ENCODE measurements at regions of chr19 and their contacts with region 1.

Region 1: DNA sequence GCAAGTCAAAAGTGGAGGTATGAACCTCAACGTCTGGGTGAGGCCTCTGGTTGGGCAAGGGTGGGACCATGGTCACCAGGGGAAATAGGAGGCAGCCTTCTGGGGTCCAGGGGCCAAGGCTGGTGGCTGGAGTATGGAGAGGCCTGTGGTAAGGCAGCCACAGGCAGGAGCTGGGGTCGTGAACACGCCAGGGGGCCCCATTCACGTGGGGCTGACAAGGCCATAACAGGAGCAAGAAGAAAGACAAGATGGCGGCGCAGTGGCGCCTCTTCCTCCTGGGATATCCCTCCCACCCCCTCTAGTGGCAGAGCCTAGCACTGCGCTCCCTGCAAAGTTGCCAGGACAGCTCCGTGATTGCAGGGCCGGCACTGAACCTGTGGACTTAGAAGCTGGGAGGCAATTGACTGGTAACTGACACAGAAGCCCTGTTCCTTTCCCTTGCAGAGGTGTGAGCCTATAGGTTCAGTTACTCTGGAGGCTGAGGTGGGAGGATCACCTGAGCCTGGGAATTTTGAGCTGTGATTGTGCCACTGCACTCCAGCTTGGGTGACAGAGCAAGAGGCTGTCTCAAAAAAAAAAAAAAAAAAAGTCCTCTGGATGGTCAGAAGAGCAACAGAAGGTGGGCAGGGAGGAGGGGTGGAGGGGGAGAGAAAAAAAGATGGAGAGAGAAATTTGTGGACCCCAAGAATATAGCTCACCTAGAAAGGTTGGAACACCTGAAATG is 19.7 kb upstream of the EDDM13 start:
- H3K4me3 ChIP-seq: no peak overlapping the region
- H3K27ac ChIP-seq: no peak overlapping the region
- H3K4me1 ChIP-seq: no peaks in the 10 kb centered on the region
- CTCF ChIP-seq: no peak

Region 2: GRCh38 chr19:56066152-56067023 is 186.5 kb before region 1 on chr19:
- CTCF ChIA-PET with region 1: interaction called, 18 read pairs
- POLR2A ChIA-PET with region 1: no interaction called
- H3K4me3 ChIP-seq: peak overlapping the region; percentile 37
- H3K27ac ChIP-seq: no peak overlapping the region
- H3K4me1 ChIP-seq: no peaks in the 10 kb centered on the region
- CTCF ChIP-seq: peak; percentile 73

Region 3: DNA sequence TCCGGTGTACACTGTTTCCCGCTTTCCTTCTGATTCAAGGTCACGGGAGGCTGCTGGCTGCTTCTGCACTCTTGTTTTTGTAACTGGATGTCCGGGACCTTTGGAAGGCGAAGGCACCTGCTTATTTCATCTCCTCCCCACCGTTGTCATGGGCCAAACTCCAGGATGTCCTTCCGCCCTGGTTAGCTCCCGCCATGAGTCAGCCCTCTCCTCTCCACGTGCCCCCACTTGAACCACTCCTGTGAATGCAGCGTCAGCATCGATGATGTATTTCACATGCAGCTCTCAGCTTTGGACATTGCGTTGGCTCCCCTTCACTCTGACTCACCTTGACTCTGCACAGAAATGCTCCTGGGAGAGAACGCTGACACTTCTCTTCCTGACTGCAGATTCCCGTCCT is 82.6 kb before region 1 on chr19:
- CTCF ChIA-PET with region 1: interaction called, 16 read pairs
- POLR2A ChIA-PET with region 1: no interaction called
- H3K4me3 ChIP-seq: no peak overlapping the region
- H3K27ac ChIP-seq: no peak overlapping the region
- H3K4me1 ChIP-seq: no peaks in the 10 kb centered on the region
- CTCF ChIP-seq: no peak

Region 4: DNA sequence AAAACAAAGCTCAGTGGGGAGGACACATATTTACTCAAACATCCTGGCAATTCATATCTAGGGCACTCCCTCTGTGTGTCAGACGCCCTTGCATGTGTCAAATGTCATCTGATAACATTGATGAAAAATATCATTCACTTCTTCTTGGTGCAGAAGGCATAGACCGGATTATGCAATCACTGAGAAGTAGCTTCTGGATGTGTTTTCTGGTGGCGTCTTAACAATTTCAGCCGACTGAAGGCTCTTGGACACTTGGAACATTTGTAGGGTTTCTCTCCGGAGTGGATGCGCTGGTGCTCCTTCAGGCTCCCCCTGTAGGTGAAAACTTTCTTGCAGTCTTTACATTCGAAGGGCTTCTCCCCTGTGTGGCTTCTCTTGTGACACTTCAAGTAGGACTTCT is 31.5 kb before region 1 on chr19:
- CTCF ChIA-PET with region 1: interaction called, 18 read pairs
- POLR2A ChIA-PET with region 1: no interaction called
- H3K4me3 ChIP-seq: no peak overlapping the region
- H3K27ac ChIP-seq: no peak overlapping the region
- H3K4me1 ChIP-seq: no peaks in the 10 kb centered on the region
- CTCF ChIP-seq: no peak

Region 5: DNA sequence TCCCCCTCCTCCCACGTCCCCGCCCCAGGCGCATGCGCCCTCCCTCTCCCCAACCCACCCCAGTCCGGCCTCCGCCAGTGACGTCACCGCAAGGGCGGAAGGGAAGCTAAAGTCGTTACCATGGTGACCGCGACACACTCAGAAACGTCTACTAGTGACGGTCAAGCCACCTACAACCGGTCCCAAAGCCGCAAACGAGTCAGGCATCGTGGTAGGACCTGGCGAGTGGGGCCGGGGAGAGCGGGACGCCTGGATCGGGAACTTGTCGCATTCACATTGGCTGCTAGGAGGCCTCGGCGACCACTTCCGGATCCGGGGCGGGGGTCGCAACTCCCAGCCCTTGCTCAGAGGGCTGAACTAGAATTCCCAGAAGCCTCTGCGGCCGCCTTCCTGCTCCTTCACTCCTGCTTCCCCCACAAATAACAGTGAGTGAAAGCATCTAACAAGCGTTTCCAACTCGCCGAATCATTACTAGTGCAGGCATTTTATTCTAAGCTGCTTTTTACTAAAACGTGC is 61.8 kb after region 1 on chr19 and contains the start of gene ZSCAN5A:
- CTCF ChIA-PET with region 1: interaction called, 34 read pairs
- POLR2A ChIA-PET with region 1: interaction called, 6 read pairs
- H3K4me3 ChIP-seq: peak within 1 kb of the TSS; percentile 100
- H3K27ac ChIP-seq: peak within 1 kb of the TSS; percentile 90
- H3K4me1 ChIP-seq: 0 out of 2 replicates have a peak, but pooled peaks cover 2% of the 10 kb centered on the region
- CTCF ChIP-seq: no peak

Region 6: GRCh38 chr19:56350416-56351045 is 97.7 kb after region 1 on chr19:
- CTCF ChIA-PET with region 1: interaction called, 11 read pairs
- POLR2A ChIA-PET with region 1: no interaction called
- H3K4me3 ChIP-seq: no peak overlapping the region
- H3K27ac ChIP-seq: no peak overlapping the region
- H3K4me1 ChIP-seq: no peaks in the 10 kb centered on the region
- CTCF ChIP-seq: no peak

Measured in HEK293 (cell line).